Heart left ventricle (tissue), 16 donors: ENCODE measurements at regions of chr12 and their contacts with region 1.

Region 1: DNA sequence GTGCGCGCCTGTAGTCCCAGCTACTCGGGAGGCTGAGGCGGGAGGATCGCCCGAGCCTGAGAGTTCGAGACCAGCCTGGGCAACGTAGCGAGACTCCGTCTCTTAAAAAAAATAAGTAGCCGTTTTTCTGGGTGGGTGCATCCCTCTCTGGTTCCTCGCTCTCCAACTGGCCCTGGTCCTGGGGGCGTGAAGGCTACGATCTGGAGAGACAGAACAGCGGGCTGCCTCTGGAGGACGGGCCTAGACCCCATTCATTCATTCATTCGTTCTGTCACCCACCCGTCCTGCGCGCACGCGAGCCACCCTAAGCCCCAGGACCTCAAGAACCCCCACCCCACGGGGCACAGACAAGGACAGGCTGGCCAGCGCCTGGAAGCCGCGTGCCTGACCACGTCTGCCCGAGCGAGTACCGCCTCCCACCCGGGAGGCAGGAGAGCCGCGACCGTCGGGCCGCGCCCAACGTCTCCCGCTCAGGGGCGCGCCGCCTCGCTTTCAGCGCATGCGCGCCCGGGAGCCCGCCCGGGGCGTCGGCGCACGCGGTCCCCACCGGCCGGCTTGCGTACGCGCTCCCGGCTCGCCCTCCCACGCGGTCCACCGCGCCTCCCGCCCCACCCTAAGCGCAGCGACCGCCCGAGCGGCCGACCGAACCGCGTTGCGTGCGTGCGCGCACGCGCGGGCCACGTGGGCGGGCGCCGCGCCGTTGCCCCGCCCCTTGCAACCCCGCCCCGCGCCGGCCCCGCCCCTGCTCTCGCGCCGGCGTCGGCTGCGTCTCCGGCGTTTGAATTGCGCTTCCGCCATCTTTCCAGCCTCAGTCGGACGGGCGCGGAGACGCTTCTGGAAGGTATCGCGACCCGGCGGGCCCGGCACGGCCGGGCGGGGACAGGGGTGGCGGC is at the start of gene RAN:
- DNase-seq: peak; percentile 92 to 97 (median 94)
- ATAC-seq: peak; percentile 84 to 94 (median 91)
- H3K4me3 ChIP-seq: peak within 1 kb of the TSS; percentile 68 to 94 (median 75)
- H3K27ac ChIP-seq: peak within 1 kb of the TSS; percentile 51 to 94 (median 88)
- H3K4me1 ChIP-seq: peaks cover 2 to 32% (median 20%) of the 10 kb centered on the region in 12 donors
- H3K27me3 ChIP-seq: no peaks in the 10 kb centered on the region
- CTCF ChIP-seq: no peak
- POLR2A ChIP-seq: peak in 1 of 2 donors; percentile 18
- total RNA-seq, gene RAN: 109 to 413 (median 303) TPM

Region 2: DNA sequence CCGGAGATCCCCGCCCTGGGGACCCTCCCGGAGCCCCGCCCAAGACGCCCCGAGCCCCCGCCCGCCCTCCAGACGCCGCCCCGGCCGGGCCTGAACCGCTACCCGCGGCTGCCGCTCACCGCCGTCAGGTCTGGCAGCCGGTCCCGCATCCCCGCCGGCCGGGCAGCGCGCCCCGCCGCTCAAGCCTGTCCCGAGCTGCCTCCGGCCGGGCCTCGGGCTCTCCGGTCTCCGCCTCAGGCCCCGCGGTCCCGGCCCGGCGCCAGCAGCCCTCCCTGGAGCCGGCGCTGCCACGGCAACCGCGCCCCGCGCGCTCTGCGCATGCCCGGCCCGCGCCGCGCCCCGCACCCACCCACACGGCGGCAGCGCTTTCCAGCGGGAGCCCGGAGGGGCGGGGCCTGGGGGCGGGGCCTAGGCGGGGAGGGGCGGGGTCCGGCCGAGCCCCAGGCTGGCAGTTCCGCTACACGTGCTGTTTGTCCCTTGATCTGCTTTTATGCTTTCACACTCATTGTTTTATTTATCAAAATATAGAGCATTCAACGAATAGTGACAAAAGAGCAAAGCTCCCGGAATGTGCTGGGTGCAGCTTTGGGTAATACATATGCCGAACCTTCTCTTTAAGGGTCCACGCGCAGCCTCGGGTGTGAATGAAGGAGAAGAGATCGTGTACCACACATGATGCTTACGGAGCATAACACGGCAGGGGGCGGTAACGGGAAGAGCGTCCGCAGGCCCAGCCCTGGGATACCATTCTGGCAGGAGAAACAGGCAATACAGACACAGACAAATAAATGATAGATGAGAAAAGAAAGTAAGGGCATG is 32.4 kb before region 1 on chr12 and contains the start of gene STX2:
- intact Hi-C with region 1: loop called in 2 of 10 experiments (anchors 2 to 5 kb)
- DNase-seq: peak; percentile 86 to 95 (median 91)
- ATAC-seq: peak; percentile 85 to 98 (median 97)
- H3K4me3 ChIP-seq: peak within 1 kb of the TSS; percentile 49 to 98 (median 82)
- H3K27ac ChIP-seq: peak within 1 kb of the TSS in 11 of 12 donors; percentile 5 to 82 (median 70)
- H3K4me1 ChIP-seq: peaks cover 0 to 34% (median 14%) of the 10 kb centered on the region in 12 donors
- H3K27me3 ChIP-seq: no peaks in the 10 kb centered on the region
- CTCF ChIP-seq: peak in 7 of 12 donors; percentile 13 to 47 (median 38)
- POLR2A ChIP-seq: peak in 1 of 2 donors; percentile 25
- total RNA-seq, gene STX2: 8.3 to 21.8 (median 11.1) TPM

Region 3: DNA sequence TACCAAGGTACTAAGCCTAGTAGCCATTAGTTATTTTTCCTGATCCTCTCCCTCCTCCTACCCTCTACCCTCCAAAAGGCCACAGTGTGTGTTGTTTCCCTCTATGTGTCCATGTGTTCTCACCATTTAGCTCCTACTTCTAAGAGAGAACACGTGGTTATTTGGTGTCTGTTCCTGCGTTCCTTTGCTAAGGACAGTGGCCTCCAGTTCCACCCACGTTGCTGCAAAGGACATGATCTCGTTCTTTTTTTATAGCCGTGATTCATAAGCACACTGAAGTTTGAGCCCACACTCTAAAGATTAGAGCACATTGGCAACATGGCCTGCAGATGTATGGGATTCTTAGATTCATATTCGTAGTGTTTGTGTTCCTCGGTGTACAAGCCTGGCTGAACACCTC is 24.4 kb before region 1 on chr12:
- intact Hi-C with region 1: loop called in 1 of 10 experiments (anchors 2 kb)
- DNase-seq: no peak
- ATAC-seq: peak; percentile 51 to 82 (median 74)
- H3K4me3 ChIP-seq: no peak overlapping the region
- H3K27ac ChIP-seq: peak overlapping the region in 2 of 12 donors; percentile 45 to 57
- H3K4me1 ChIP-seq: peaks cover 0 to 6% (median 0%) of the 10 kb centered on the region in 12 donors
- H3K27me3 ChIP-seq: no peaks in the 10 kb centered on the region
- CTCF ChIP-seq: no peak
- POLR2A ChIP-seq: no peak

Region 4: DNA sequence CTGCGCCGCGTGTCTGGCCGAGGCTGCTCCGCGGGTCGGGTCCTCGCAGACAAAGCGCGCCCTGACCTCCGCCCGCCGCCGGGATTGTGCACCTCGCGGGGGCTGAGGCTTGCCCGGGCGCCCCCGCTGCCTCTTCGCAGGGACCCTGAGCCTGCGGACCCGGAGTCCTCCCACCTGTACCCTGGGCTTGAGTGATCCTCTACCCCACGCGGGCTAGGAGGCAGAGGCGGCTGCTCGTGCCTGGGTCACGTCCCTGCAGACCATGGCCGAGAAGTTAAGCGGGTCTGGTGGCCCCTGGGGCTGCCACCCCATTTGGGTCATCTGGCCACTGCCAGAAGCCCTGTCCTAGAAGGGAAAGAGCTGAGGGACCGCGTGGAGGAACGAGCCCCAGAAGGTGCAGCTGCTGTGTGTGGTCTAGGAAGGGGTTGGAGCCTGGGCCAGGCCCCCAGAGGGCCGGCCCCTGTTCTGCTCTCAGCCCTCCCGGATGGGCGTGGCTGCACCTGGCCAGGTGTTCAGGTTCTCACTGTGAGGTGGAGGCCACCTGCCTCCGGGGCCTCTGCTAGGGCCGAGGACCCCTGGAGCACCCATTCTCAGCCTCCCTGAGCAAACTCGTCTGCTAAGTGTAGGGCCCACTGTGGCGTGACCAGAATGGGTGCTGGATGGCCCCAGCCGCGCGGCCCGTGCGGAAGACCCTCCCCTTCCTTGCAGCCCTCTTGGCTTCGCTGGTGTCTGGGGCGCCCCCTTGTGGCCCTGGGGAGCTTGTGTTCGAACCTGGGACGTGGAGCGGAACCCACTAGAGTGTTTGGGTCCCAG is 1689.3 kb after region 1 on chr12:
- intact Hi-C with region 1: no loop called
- DNase-seq: no peak
- ATAC-seq: peak in 3 of 4 donors; percentile 3 to 28 (median 13)
- H3K4me3 ChIP-seq: peak overlapping the region; percentile 33 to 78 (median 60)
- H3K27ac ChIP-seq: no peak overlapping the region
- H3K4me1 ChIP-seq: peaks cover 0 to 29% (median 13%) of the 10 kb centered on the region in 12 donors
- H3K27me3 ChIP-seq: peaks cover 0 to 18% (median 0%) of the 10 kb centered on the region in 9 donors
- CTCF ChIP-seq: peak; percentile 29 to 60 (median 52)
- POLR2A ChIP-seq: no peak